Naive thymus-derived CD4-positive, alpha-beta T cell (primary cell): ENCODE measurements at regions of chr5 and their contacts with region 1.

Region 1: DNA sequence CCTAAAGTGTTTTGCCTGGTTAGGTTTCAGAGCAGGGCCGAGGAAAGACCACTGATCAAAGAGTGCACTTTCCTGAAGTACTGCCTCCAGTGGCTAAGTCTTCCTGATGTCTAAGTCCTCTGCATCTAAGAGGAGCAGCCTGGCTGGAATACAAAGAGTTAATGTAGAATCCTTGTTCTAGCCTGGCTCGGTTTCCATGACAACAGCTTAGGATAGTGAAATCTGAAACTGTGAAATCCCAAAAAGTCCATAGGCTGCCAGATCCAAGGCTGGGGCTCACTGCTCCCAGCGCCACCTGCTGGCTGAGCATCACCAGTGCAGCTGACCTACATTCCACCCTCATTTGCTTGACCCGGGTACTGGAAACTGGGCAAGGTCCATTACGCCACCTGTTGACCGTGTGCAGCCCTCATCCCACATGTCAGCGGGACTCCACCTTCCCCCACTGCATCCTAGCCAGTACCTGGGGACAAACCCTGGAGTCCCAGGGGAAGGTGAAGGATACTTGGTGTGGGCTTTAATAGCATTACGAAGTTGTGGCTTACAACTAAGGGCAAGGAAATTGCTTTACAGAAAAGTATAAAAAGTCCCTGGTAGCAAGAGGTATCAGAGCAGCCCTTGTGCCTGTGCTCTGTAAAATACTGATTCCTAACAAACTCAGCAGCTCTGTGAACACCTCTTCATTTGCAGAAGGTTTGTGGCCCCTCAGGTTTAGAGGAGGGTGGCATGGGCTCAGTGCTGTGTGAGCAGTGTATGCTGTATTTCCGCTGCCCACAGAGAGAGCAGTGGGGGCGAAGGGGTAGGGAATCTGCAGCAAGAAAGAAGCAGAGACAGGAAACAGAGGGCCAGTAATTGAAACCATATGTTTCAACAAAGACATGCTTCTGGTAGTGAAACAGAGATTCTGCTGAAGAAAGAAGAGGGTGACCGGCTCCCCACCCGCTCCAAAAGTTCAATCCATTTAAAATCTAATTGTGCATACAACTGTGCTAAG is 36.0 kb downstream of the PCDHGC5 start:
- DNase-seq: peak; percentile 18 to 64 (median 43)
- ATAC-seq: peak; percentile 88
- H3K4me3 ChIP-seq: no peak overlapping the region
- H3K4me3 Mint-ChIP-seq: peak overlapping the region in 1 of 10 donors; percentile 21
- H3K27ac ChIP-seq: no peak overlapping the region
- H3K27ac Mint-ChIP-seq: peak overlapping the region in 8 of 9 donors; percentile 19 to 80 (median 54)
- H3K4me1 ChIP-seq: peaks cover 0 to 6% of the 10 kb centered on the region in 2 donors
- H3K4me1 Mint-ChIP-seq: peaks cover 6 to 28% (median 16%) of the 10 kb centered on the region in 7 donors
- H3K27me3 ChIP-seq: no peaks in the 10 kb centered on the region
- H3K27me3 Mint-ChIP-seq: no peaks in the 10 kb centered on the region

Region 2: DNA sequence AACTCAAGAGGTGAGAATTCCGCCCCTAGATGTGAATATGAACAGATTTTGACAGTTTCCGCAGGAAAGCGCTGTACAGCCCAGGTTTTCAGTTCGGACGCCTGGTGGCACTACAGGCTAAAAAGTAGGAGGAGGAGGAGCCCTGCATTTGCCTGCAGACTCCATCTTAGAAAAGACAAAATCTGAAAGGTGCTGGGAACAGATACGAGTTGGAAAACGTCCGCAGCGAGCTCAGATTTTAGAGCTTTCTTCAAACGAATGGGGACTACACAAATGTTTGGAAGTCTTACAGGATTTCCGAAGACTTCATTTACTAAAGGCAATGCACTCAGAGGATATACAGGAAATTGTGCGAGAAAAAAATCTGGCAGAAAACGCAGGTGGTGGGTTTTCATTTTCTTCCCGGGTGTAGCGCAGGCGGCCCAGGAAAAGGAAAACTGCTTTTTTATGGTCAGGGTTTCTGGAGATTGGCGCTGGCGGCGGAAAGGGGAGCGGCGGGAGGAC is 440.4 kb before region 1 on chr5:
- CTCF ChIA-PET with region 1: no interaction called
- POLR2A ChIA-PET with region 1: no interaction called
- intact Hi-C with region 1: loop called in 1 of 2 experiments (anchors 1 kb)
- DNase-seq: peak in 7 of 9 donors; percentile 17 to 55 (median 31)
- ATAC-seq: peak; percentile 82
- H3K4me3 ChIP-seq: peak overlapping the region; percentile 40
- H3K4me3 Mint-ChIP-seq: peak overlapping the region; percentile 77 to 95 (median 90)
- H3K27ac ChIP-seq: no peak overlapping the region
- H3K27ac Mint-ChIP-seq: peak overlapping the region in 6 of 9 donors; percentile 48 to 90 (median 80)
- H3K4me1 ChIP-seq: no peaks in the 10 kb centered on the region
- H3K4me1 Mint-ChIP-seq: peaks cover 0 to 13% (median 8%) of the 10 kb centered on the region in 7 donors
- H3K27me3 ChIP-seq: no peaks in the 10 kb centered on the region
- H3K27me3 Mint-ChIP-seq: peaks cover 6 to 64% (median 34%) of the 10 kb centered on the region in 5 donors

Region 3: DNA sequence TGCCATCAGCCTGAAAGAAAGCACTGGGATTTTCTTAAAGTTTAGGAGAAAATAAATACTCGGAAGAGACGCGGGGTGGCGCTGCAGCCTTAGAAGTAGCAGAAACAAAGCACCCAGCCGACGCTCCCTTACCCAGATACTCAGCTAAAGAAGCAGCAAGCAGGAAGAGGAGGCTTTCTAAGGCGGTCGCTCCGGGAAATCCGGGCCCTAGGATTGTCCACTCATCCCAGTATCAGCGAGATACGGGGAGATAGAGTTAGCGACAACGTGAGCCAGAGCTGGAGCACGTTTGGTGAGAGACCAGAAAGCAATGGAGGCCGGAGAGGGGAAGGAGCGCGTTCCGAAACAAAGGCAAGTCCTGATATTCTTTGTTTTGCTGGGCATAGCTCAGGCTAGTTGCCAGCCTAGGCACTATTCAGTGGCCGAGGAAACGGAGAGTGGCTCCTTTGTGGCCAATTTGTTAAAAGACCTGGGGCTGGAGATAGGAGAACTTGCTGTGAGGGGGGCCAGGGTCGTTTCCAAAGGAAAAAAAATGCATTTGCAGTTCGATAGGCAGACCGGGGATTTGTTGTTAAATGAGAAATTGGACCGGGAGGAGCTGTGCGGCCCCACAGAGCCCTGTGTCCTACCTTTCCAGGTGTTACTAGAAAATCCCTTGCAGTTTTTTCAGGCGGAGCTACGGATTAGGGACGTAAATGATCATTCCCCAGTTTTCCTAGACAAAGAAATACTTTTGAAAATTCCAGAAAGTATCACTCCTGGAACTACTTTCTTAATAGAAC is 430.2 kb before region 1 on chr5 and contains the start of gene PCDHB2:
- CTCF ChIA-PET with region 1: no interaction called
- POLR2A ChIA-PET with region 1: no interaction called
- intact Hi-C with region 1: loop called in 1 of 2 experiments (anchors 5 kb)
- DNase-seq: no peak
- ATAC-seq: no peak
- H3K4me3 ChIP-seq: no peak within 1 kb of the TSS
- H3K4me3 Mint-ChIP-seq: peak within 1 kb of the TSS in 6 of 10 donors; percentile 10 to 69 (median 44)
- H3K27ac ChIP-seq: no peak within 1 kb of the TSS
- H3K27ac Mint-ChIP-seq: peak within 1 kb of the TSS in 1 of 9 donors; percentile 63
- H3K4me1 ChIP-seq: no peaks in the 10 kb centered on the region
- H3K4me1 Mint-ChIP-seq: peaks cover 0 to 6% (median 0%) of the 10 kb centered on the region in 7 donors
- H3K27me3 ChIP-seq: no peaks in the 10 kb centered on the region
- H3K27me3 Mint-ChIP-seq: peaks cover 0 to 68% (median 52%) of the 10 kb centered on the region in 5 donors
- total RNA-seq, gene PCDHB2: 0.34 to 0.97 (median 0.72) TPM in 4 of 5 experiments, not detected in the other

Region 4: DNA sequence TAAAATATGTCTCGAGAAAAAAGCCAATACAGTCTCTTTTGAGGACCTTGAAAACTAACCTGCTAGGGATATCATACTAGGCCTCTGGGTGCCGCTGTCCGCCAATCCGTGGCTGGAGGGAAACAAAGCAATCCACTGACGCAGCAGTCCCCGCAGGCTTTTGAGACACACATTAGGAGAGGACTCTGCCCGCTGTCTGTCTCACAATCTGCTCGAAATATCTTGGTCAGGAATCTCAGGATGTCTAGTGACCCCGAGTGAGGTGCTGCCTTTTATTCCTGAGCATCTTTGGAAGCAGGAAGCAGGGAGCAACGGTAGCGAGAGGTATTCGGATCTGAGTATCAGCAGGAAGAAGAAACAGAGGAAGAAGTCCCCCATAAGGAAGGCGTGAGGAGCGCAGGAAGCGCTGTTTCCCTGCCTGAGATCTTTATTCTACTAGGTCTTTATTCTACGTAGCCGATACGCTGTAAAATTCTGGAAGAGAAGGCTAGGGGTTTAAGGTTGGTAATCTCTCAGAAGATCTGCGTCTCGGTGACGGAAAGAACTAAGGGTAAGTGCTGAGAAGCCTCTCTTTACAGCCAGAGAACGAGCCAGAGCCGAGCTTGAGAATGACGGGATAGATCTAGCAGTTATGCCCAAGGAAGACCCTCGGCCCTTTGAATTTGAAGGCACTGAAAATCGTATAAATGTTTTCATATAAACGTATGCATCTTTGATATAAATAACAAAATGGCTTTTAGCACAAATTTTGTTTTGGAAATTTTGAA is 198.6 kb before region 1 on chr5:
- CTCF ChIA-PET with region 1: interaction called, 4 read pairs
- POLR2A ChIA-PET with region 1: no interaction called
- intact Hi-C with region 1: loop called (anchors 1 kb)
- DNase-seq: peak; percentile 39 to 75 (median 57)
- ATAC-seq: peak; percentile 95
- H3K4me3 ChIP-seq: peak overlapping the region; percentile 73
- H3K4me3 Mint-ChIP-seq: peak overlapping the region; percentile 78 to 98 (median 90)
- H3K27ac ChIP-seq: peak overlapping the region; percentile 53
- H3K27ac Mint-ChIP-seq: peak overlapping the region; percentile 17 to 95 (median 80)
- H3K4me1 ChIP-seq: no peaks in the 10 kb centered on the region
- H3K4me1 Mint-ChIP-seq: peaks cover 0 to 15% (median 7%) of the 10 kb centered on the region in 7 donors
- H3K27me3 ChIP-seq: peaks cover 0 to 5% of the 10 kb centered on the region in 2 donors
- H3K27me3 Mint-ChIP-seq: peaks cover 8 to 48% (median 41%) of the 10 kb centered on the region in 5 donors

Region 5: DNA sequence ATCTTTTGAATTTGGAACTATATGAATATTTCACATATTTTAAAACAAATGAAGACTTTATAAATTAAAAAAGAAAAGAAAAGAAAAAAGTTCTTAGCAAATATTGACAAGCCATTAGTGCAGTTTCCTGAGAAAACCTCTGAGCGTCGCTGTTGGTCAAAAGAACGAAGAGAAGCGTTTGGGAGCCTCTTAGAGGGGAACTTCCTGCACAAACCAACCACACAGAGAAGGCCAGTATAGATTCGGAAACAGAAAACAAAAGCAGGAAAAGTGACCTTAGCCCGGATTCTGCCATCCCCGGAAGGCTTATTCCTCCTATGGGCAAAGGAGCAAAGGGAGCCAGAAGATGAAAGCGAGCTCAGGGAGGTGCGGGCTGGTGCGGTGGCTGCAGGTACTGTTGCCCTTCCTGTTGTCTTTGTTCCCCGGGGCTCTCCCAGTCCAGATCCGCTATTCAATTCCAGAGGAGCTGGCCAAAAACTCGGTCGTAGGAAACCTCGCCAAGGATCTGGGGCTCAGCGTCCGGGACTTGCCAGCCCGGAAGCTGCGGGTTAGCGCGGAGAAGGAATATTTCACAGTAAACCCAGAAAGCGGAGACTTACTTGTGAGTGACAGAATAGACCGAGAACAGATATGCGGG is 165.0 kb before region 1 on chr5 and contains the start of gene PCDHGB2:
- CTCF ChIA-PET with region 1: no interaction called
- POLR2A ChIA-PET with region 1: no interaction called
- intact Hi-C with region 1: loop called in 1 of 2 experiments (anchors 1 kb)
- DNase-seq: peak in 1 of 9 donors; percentile 22
- ATAC-seq: peak; percentile 54
- H3K4me3 ChIP-seq: peak within 1 kb of the TSS; percentile 43
- H3K4me3 Mint-ChIP-seq: peak within 1 kb of the TSS; percentile 33 to 87 (median 78)
- H3K27ac ChIP-seq: no peak within 1 kb of the TSS
- H3K27ac Mint-ChIP-seq: peak within 1 kb of the TSS in 3 of 9 donors; percentile 48 to 57 (median 56)
- H3K4me1 ChIP-seq: no peaks in the 10 kb centered on the region
- H3K4me1 Mint-ChIP-seq: peaks cover 0 to 6% (median 3%) of the 10 kb centered on the region in 7 donors
- H3K27me3 ChIP-seq: peaks cover 5 to 19% of the 10 kb centered on the region in 2 donors
- H3K27me3 Mint-ChIP-seq: peaks cover 37 to 90% (median 87%) of the 10 kb centered on the region in 5 donors
- total RNA-seq, gene PCDHGB2: 0.24 to 1.3 (median 0.36) TPM in 4 of 5 experiments, not detected in the other

Region 6: GRCh38 chr5:141412854-141413539 is 111.9 kb before region 1 on chr5 and contains the start of gene PCDHGA10:
- CTCF ChIA-PET with region 1: interaction called, 3 read pairs
- POLR2A ChIA-PET with region 1: no interaction called
- intact Hi-C with region 1: loop called in 1 of 2 experiments (anchors 1 kb)
- DNase-seq: peak in 7 of 9 donors; percentile 38 to 66 (median 52)
- ATAC-seq: peak; percentile 84
- H3K4me3 ChIP-seq: peak within 1 kb of the TSS; percentile 73
- H3K4me3 Mint-ChIP-seq: peak within 1 kb of the TSS; percentile 83 to 92 (median 87)
- H3K27ac ChIP-seq: no peak within 1 kb of the TSS
- H3K27ac Mint-ChIP-seq: peak within 1 kb of the TSS in 2 of 9 donors; percentile 54 to 56
- H3K4me1 ChIP-seq: peaks cover 0 to 5% of the 10 kb centered on the region in 2 donors
- H3K4me1 Mint-ChIP-seq: peaks cover 13 to 27% (median 19%) of the 10 kb centered on the region in 7 donors
- H3K27me3 ChIP-seq: peaks cover 23% of the 10 kb centered on the region in 2 donors
- H3K27me3 Mint-ChIP-seq: peaks cover 69 to 80% (median 75%) of the 10 kb centered on the region in 5 donors
- total RNA-seq, gene PCDHGA10: 0.11 to 0.39 (median 0.24) TPM

Region 7: GRCh38 chr5:141475625-141476131 is 49.2 kb before region 1 on chr5 and contains the start of gene PCDHGC3:
- CTCF ChIA-PET with region 1: interaction called, 3 read pairs
- POLR2A ChIA-PET with region 1: no interaction called
- intact Hi-C with region 1: loop called in 1 of 2 experiments (anchors 2 kb)
- DNase-seq: peak in 2 of 9 donors; percentile 13 to 50
- ATAC-seq: peak; percentile 78
- H3K4me3 ChIP-seq: peak within 1 kb of the TSS; percentile 67
- H3K4me3 Mint-ChIP-seq: peak within 1 kb of the TSS; percentile 83 to 95 (median 91)
- H3K27ac ChIP-seq: no peak within 1 kb of the TSS
- H3K27ac Mint-ChIP-seq: peak within 1 kb of the TSS in 2 of 9 donors; percentile 21 to 87
- H3K4me1 ChIP-seq: peaks cover 5 to 13% of the 10 kb centered on the region in 2 donors
- H3K4me1 Mint-ChIP-seq: peaks cover 16 to 32% (median 29%) of the 10 kb centered on the region in 7 donors
- H3K27me3 ChIP-seq: peaks cover 3 to 13% of the 10 kb centered on the region in 2 donors
- H3K27me3 Mint-ChIP-seq: peaks cover 52 to 71% (median 55%) of the 10 kb centered on the region in 5 donors
- total RNA-seq, gene PCDHGC3: 0.15 to 0.76 (median 0.16) TPM

Region 8: GRCh38 chr5:141501761-141502160 is 23.1 kb before region 1 on chr5:
- CTCF ChIA-PET with region 1: no interaction called
- POLR2A ChIA-PET with region 1: no interaction called
- intact Hi-C with region 1: no loop called
- DNase-seq: no peak
- ATAC-seq: no peak
- H3K4me3 ChIP-seq: no peak overlapping the region
- H3K4me3 Mint-ChIP-seq: no peak overlapping the region
- H3K27ac ChIP-seq: no peak overlapping the region
- H3K27ac Mint-ChIP-seq: no peak overlapping the region
- H3K4me1 ChIP-seq: no peaks in the 10 kb centered on the region
- H3K4me1 Mint-ChIP-seq: no peaks in the 10 kb centered on the region
- H3K27me3 ChIP-seq: no peaks in the 10 kb centered on the region
- H3K27me3 Mint-ChIP-seq: peaks cover 3 to 27% (median 15%) of the 10 kb centered on the region in 5 donors